Gastrocnemius medialis (tissue), 4 donors: ENCODE measurements at regions of chr2 and their contacts with region 1.

Region 1: GRCh38 chr2:19901442-19902215 is at the start of gene TTC32:
- DNase-seq: peak; percentile 88 to 90
- ATAC-seq: peak; percentile 95
- H3K4me3 ChIP-seq: peak within 1 kb of the TSS; percentile 60 to 96 (median 92)
- H3K27ac ChIP-seq: peak within 1 kb of the TSS; percentile 90 to 98 (median 96)
- H3K4me1 ChIP-seq: peaks cover 43 to 49% of the 10 kb centered on the region in 2 donors
- H3K27me3 ChIP-seq: no peaks in the 10 kb centered on the region
- CTCF ChIP-seq: peak in 2 of 5 experiments; percentile 11 to 35
- POLR2A ChIP-seq: peak; percentile 87 to 89
- total RNA-seq, gene TTC32: 6.6 to 19.6 (median 10.7) TPM

Region 2: GRCh38 chr2:18560031-18560796 is 1341.4 kb before region 1 on chr2 and contains the start of gene RDH14:
- in situ Hi-C with region 1: no loop called
- intact Hi-C with region 1: loop called (anchors 5 kb)
- DNase-seq: peak; percentile 94 to 96
- ATAC-seq: peak; percentile 94 to 96
- H3K4me3 ChIP-seq: peak within 1 kb of the TSS; percentile 65 to 83 (median 74)
- H3K27ac ChIP-seq: peak within 1 kb of the TSS; percentile 89 to 97 (median 92)
- H3K4me1 ChIP-seq: peaks cover 39 to 42% of the 10 kb centered on the region in 2 donors
- H3K27me3 ChIP-seq: no peaks in the 10 kb centered on the region
- CTCF ChIP-seq: no peak
- POLR2A ChIP-seq: peak; percentile 81 to 84
- total RNA-seq, gene RDH14: 24.6 to 55.4 (median 49.8) TPM

Region 3: DNA sequence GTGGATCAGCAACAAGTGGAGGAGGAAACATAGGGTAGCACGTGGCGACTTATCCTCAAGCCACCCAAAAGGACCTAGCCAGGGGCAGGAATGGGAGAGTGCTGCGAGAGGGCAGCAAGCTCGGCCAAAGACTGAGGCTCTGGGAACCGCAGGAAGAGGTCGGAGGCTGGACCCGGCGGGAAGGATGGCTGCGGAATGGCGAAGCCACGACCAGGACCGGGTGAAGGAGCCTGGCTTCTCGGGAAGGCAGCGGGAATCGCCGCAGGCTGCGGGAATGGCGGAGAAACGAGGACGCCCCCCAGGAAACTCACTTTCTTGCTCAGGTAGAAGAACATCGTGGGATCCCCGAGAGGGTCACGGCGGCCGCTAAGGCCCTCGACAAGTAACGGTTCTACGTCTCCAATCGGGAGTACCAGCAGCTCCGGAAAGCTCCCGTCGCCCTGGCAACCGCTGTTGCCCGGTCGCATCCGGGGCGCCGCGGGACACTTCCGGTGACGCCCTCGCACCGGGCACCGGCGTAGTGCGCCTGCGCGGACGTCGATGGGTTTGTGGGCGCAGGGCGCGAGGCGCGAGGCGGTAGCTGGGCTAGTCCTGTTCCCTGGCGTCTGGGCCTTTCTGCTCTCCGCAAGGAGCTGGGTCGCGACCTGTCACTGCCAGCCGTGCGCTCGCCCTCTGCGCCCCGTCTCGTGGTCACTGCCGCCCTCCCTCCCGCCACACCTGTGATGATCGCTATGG is 88.2 kb after region 1 on chr2 and contains the start of gene WDR35:
- in situ Hi-C with region 1: no loop called
- intact Hi-C with region 1: loop called (anchors 5 kb)
- DNase-seq: peak; percentile 74 to 83
- ATAC-seq: peak; percentile 96
- H3K4me3 ChIP-seq: peak within 1 kb of the TSS; percentile 71 to 91 (median 88)
- H3K27ac ChIP-seq: peak within 1 kb of the TSS; percentile 64 to 72 (median 68)
- H3K4me1 ChIP-seq: peaks cover 11 to 19% of the 10 kb centered on the region in 2 donors
- H3K27me3 ChIP-seq: peaks cover 0 to 8% (median 0%) of the 10 kb centered on the region in 3 donors
- CTCF ChIP-seq: no peak
- POLR2A ChIP-seq: peak; percentile 14 to 50
- total RNA-seq, gene WDR35: 3.3 to 4.5 (median 3.7) TPM